ENCODE measurements at regions of chr17 and their contacts with region 1.

Region 1: GRCh38 chr17:72120642-72121163 is at the start of gene SOX9:
- DNase-seq: peak; percentile 90 to 99 (median 96)

Region 2: DNA sequence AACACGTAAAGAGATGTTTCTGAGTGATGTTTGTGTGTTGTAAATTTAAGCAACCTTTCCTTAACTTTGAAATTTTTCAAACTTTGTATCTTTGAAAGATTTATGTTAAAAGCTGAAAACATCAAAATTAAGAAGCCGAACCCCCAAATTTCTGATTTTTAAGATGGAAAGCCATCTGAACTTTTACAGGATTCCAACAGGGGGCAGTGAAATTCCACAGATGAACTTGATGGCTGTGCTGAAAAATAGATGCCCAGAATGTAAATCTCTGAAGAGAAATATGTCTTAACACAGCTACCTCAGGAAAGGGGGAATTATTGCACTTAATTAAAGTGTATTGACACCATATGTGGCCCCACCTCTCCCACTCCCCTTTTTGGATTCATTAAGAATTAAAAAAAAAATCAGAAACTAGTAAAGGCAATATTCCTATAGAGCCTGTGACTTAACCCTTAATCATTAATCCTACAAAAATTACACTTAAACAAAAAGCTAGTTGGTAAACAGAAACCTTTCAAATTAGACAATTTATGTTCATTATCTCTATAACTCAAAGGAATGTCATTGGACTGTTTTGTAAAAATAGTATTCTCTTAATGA is 1353.5 kb before region 1 on chr17:
- intact Hi-C with region 1: loop called (anchors 10 kb)
- DNase-seq: peak in 17 of 42 donors; percentile 6 to 58 (median 25)

Region 3: DNA sequence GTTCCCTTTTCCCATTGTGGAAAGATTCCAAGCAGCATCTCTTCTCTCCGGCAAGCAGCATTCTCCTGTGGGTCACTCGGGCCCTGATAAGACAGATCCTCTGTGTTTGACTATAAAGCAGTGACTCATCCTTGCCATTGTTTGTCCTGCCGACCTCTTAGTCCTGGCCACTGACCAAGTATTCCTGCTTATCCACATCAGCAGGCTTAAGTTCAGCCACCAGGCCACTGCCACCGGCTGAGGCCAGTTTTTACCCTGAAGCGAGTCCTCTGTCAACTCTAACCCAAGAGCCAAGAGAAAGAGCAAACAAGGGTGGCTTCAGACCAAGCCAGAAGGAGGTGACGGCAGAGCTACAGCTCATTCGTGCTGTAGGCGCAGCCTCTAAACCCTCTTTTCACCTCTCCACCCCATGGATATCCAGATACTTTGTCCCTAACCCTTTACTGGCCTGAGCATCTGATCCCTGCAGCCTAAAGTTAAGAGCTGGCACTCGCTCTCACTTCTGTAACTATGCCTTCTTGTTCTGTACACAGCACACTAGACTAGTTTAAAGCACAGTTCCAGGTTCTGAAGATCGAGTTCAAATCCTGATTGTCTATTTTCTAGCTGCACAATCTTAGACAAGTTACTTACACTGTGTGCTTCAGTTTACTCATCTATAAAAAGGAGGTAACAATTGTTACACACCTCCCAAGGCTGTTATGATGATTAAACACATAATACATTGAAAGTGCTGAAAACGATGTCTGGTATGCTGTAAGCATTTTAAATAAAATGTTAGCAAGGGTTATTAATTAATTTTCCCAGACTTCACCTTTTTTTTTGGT is 31.1 kb after region 1 on chr17:
- intact Hi-C with region 1: no loop called
- DNase-seq: peak; percentile 14 to 87 (median 66)

Region 4: GRCh38 chr17:72171703-72172667 is 51.3 kb after region 1 on chr17:
- intact Hi-C with region 1: loop called (anchors 10 kb)
- DNase-seq: peak in 35 of 42 donors; percentile 31 to 82 (median 58)

Measured in head of caudate nucleus (tissue), 42 donors.